ENCODE measurements at regions of chr1 and their contacts with region 1.

Region 1: GRCh38 chr1:154791292-154792166 is 78.6 kb downstream of the KCNN3 start:
- DNase-seq: peak; percentile 92
- H3K4me3 Mint-ChIP-seq: peak overlapping the region; percentile 47
- H3K27ac Mint-ChIP-seq: peak overlapping the region; percentile 88
- H3K4me1 Mint-ChIP-seq: peaks cover 29% of the 10 kb centered on the region
- H3K27me3 Mint-ChIP-seq: no peaks in the 10 kb centered on the region

Region 2: DNA sequence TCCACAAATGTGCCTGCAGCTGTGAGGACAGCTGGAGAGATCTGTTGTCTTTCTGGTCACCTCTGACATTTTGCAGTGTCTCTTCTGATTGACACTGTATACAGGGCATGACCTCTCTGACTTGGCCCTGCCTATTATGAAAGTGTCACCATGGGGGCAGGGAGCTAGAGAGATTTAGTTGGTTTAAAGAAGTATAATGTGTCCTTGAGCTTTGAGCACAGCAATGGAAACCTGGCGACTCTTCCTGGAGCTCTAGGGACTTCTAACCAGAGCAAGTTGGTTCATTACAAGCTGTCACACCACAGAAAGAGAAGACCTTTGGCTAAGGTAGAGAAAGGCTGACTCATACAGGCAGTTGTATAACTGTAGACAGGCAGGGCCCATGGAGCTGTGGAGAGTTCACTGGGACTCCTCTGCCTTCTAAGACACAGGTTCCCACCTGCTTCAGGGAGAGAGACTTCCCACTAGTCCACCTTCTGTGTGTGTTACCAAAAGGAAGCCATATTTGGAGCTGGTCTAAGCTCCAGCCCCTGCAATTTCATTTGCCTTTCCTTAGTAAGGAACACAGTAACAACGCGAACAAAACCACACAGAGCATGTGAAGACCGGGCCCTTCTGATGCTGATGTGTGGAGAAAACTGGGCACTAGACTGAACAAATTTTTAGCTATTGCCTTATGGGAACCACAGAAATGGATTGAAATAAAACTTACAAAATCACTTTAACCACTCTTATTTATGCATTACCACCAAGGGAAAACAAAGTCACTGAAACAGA is 93.0 kb before region 1 on chr1:
- CTCF ChIA-PET with region 1: no interaction called
- intact Hi-C with region 1: loop called (anchors 1 kb)
- DNase-seq: peak; percentile 52
- H3K4me3 Mint-ChIP-seq: no peak overlapping the region
- H3K27ac Mint-ChIP-seq: peak overlapping the region; percentile 27
- H3K4me1 Mint-ChIP-seq: peaks cover 15% of the 10 kb centered on the region
- H3K27me3 Mint-ChIP-seq: no peaks in the 10 kb centered on the region

Region 3: GRCh38 chr1:154741741-154742495 is 49.6 kb before region 1 on chr1:
- CTCF ChIA-PET with region 1: no interaction called
- intact Hi-C with region 1: no loop called
- DNase-seq: no peak
- H3K4me3 Mint-ChIP-seq: no peak overlapping the region
- H3K27ac Mint-ChIP-seq: no peak overlapping the region
- H3K4me1 Mint-ChIP-seq: peaks cover 56% of the 10 kb centered on the region
- H3K27me3 Mint-ChIP-seq: no peaks in the 10 kb centered on the region

Region 4: DNA sequence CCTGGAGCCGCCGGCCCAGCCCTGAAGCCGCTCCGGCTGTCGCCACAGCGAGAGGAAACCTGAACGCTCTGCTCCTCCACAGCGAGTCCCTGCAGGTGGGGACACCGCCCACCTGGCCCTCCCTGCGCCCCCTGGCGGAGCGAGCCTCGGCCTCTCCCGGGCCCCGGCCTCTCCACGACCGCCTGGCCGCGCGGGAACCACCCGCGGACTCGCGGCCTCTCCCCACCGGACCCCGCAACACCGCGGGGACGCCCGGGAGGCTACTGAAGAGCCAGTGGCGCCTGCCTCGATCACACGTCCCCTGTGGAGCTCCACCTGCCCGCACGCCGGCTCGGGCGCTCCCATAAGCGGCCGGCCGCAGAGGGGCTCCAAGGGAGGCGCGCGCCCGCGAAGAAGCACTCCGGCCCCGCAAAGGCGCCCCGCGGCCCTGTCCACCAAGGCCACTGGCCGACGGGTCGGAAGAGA is 31.0 kb before region 1 on chr1:
- CTCF ChIA-PET with region 1: interaction called, 10 read pairs
- intact Hi-C with region 1: loop called (anchors 1 kb)
- DNase-seq: peak; percentile 85
- H3K4me3 Mint-ChIP-seq: peak overlapping the region; percentile 75
- H3K27ac Mint-ChIP-seq: peak overlapping the region; percentile 99
- H3K4me1 Mint-ChIP-seq: peaks cover 56% of the 10 kb centered on the region
- H3K27me3 Mint-ChIP-seq: no peaks in the 10 kb centered on the region

Region 5: DNA sequence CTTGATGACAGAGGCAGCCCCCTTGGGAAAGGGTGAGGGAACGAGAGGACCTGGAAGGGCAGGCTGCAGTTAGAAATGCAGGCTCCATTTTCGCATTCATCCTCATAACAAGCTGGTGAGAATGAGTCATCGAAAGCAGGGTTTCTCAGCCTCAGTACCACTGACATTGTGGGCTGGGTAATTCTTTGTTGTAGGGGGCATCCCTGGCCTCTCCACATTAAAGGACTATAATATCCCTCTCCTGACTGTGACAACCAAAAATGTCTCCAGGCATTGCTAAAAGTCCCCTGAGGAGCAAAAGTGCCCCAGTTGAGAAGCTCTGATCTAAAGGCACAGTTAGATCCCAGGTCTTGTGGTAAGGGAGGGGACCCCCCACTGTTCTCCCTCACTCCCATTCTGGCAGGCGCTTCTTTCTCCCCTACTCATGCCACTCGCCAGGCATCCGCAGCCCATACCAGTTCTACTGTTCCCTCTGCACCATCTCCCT is 58.2 kb after region 1 on chr1:
- CTCF ChIA-PET with region 1: no interaction called
- intact Hi-C with region 1: loop called (anchors 1 kb)
- DNase-seq: peak; percentile 83
- H3K4me3 Mint-ChIP-seq: no peak overlapping the region
- H3K27ac Mint-ChIP-seq: peak overlapping the region; percentile 66
- H3K4me1 Mint-ChIP-seq: peaks cover 17% of the 10 kb centered on the region
- H3K27me3 Mint-ChIP-seq: peaks cover 5% of the 10 kb centered on the region

Region 6: GRCh38 chr1:154955718-154956543 is 164.4 kb after region 1 on chr1 and contains the start of gene PBXIP1:
- CTCF ChIA-PET with region 1: no interaction called
- intact Hi-C with region 1: no loop called
- DNase-seq: peak; percentile 88
- H3K4me3 Mint-ChIP-seq: peak within 1 kb of the TSS; percentile 91
- H3K27ac Mint-ChIP-seq: peak within 1 kb of the TSS; percentile 96
- H3K4me1 Mint-ChIP-seq: peaks cover 74% of the 10 kb centered on the region
- H3K27me3 Mint-ChIP-seq: no peaks in the 10 kb centered on the region
- total RNA-seq, gene PBXIP1: 55.3 to 55.5 TPM